ENCODE measurements at regions of chr19 and their contacts with region 1.

Region 1: DNA sequence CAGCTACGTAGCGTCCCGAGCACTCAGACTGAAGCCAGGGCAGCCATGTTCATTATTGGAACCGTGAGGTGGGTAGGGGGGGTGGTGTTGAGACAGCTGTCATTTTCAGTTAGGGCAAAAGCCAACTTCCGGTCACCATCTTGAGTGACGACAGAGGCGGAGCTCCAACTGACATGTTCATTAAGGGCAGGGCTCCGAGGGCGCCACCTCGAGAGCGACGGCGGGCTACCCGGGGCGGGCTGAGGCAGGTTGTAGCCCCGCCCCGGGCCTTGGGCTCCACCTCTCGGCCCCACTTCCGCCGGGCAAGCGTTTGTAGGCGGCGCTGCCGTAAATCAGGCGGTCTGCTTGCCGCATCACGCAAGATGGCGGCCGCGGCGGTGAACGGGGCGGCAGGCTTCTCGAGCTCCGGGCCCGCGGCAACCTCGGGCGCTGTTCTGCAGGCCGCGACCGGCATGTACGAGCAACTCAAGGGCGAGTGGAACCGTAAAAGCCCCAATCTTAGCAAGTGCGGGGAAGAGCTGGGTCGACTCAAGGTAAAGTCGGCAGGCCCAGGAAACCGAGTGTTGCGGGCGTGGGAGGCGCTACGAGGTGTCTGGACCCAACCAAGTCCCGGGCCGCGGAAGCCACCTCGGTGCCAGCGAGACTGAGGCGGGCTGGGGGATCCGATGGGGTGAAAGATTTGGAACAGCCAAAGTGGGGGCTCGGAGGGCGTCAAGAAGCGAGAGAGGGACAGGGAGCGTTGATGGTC is at the start of gene PSMD8:
- DNase-seq: peak; percentile 96
- ATAC-seq: peak; percentile 96
- H3K4me3 Mint-ChIP-seq: peak within 1 kb of the TSS; percentile 100
- H3K27ac Mint-ChIP-seq: peak within 1 kb of the TSS; percentile 96
- H3K4me1 Mint-ChIP-seq: peaks cover 25% of the 10 kb centered on the region
- H3K27me3 Mint-ChIP-seq: no peaks in the 10 kb centered on the region
- CTCF ChIP-seq: no peak
- total RNA-seq, gene PSMD8: 134 and 138 TPM in 2 replicates

Region 2: DNA sequence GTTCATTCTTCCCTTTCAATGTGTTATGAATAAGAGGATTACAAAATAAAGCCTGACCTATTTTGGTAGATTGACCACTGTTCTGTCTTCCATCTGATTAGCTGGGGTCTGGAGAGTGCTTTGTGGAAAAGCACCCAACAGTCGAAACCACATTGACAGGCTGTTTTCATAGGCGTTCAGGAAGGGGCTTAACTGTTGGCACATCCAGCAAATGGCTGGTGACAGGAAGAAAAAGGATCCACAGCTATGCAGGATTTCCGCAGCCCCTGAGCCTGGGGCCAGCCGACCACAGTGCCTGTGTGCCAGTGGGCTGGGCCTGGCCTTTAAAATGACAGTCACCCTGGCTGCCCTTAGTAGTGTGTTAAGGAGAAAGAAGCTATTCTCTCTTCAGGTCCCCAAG is 354.3 kb before region 1 on chr19:
- CTCF ChIA-PET with region 1: no interaction called
- POLR2A ChIA-PET with region 1: no interaction called
- intact Hi-C with region 1: no loop called
- DNase-seq: no peak
- ATAC-seq: peak; percentile 22
- H3K4me3 Mint-ChIP-seq: no peak overlapping the region
- H3K27ac Mint-ChIP-seq: peak overlapping the region; percentile 61
- H3K4me1 Mint-ChIP-seq: peaks cover 86% of the 10 kb centered on the region
- H3K27me3 Mint-ChIP-seq: no peaks in the 10 kb centered on the region
- CTCF ChIP-seq: no peak

Region 3: GRCh38 chr19:38229585-38230073 is 145.0 kb before region 1 on chr19:
- CTCF ChIA-PET with region 1: interaction called, 7 read pairs
- POLR2A ChIA-PET with region 1: no interaction called
- intact Hi-C with region 1: loop called (anchors 1 kb)
- DNase-seq: peak; percentile 52
- ATAC-seq: peak; percentile 87
- H3K4me3 Mint-ChIP-seq: no peak overlapping the region
- H3K27ac Mint-ChIP-seq: no peak overlapping the region
- H3K4me1 Mint-ChIP-seq: peaks cover 21% of the 10 kb centered on the region
- H3K27me3 Mint-ChIP-seq: peaks cover 40% of the 10 kb centered on the region
- CTCF ChIP-seq: no peak

Region 4: DNA sequence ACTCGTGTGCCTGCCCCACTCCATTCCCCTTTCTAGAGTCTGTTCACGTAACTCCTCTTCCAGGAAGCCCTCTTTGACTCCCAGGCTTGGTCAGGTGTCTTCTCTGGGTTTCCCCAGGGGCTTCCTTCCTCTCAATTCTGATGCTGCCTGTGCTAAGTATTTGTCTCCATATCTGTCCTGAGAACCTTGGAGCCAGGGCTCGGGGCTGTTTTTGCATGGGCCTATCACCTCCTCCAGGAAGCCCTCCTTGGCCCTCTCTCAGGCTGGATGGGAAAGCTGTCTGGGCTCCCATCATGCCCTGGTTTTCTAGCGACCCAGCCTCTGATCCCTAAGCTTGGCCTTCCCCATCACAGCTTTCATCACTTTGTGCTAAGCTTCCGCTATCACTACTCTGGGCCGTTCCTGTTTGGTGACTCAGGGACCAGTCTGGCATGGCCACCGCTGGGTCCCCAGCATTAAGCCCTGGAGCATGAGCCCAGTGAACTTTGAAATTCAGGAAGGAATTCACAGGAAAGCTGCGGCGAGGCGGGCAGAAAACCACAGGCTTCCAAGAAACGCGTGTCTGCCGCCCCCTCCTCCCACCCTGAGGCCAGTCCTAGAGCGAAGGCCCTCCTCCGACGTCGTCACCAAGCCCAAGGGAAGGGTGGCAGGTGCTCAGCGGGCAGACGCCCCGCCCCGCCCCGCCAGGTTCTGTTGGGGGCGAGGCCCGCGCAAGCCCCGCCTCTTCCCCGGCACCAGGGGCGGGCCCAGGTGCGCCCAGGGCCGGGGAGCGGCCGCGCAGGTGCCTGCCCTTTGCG is 110.7 kb before region 1 on chr19:
- CTCF ChIA-PET with region 1: no interaction called
- POLR2A ChIA-PET with region 1: interaction called, 33 read pairs
- intact Hi-C with region 1: loop called (anchors 1 kb)
- DNase-seq: peak; percentile 86
- ATAC-seq: peak; percentile 89
- H3K4me3 Mint-ChIP-seq: peak overlapping the region; percentile 91
- H3K27ac Mint-ChIP-seq: peak overlapping the region; percentile 99
- H3K4me1 Mint-ChIP-seq: peaks cover 43% of the 10 kb centered on the region
- H3K27me3 Mint-ChIP-seq: no peaks in the 10 kb centered on the region
- CTCF ChIP-seq: no peak

Region 5: DNA sequence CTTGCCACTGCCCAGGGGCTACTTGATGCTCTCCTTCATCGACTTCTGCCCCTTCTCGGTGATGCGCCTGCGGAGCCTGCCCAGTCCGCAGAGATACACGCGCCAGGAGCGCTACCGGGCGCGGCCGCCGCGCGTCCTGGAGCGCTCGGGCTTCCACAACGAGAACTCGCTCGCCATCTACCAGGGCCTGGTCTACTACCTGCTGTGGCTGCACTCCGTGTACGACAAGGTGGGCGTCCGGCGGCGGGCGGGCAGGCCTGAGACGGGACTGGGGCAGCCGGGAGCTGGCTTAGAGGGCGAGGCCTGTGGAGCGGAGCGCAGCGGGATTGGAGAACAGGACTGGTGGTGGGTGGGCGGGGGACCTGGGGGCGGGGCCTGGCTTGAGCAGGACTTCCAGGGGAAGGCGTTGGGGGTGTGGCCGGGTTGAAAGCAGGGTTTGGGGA is 12.9 kb before region 1 on chr19:
- CTCF ChIA-PET with region 1: no interaction called
- POLR2A ChIA-PET with region 1: interaction called, 21 read pairs
- intact Hi-C with region 1: loop called (anchors 1 kb)
- DNase-seq: no peak
- ATAC-seq: peak; percentile 76
- H3K4me3 Mint-ChIP-seq: peak overlapping the region; percentile 85
- H3K27ac Mint-ChIP-seq: no peak overlapping the region
- H3K4me1 Mint-ChIP-seq: peaks cover 19% of the 10 kb centered on the region
- H3K27me3 Mint-ChIP-seq: peaks cover 7% of the 10 kb centered on the region
- CTCF ChIP-seq: no peak

Region 6: GRCh38 chr19:38394488-38394887 is 19.9 kb after region 1 on chr19:
- CTCF ChIA-PET with region 1: interaction called, 4 read pairs
- POLR2A ChIA-PET with region 1: interaction called, 78 read pairs
- intact Hi-C with region 1: no loop called
- DNase-seq: peak; percentile 46
- ATAC-seq: peak; percentile 76
- H3K4me3 Mint-ChIP-seq: peak overlapping the region; percentile 73
- H3K27ac Mint-ChIP-seq: no peak overlapping the region
- H3K4me1 Mint-ChIP-seq: peaks cover 16% of the 10 kb centered on the region
- H3K27me3 Mint-ChIP-seq: peaks cover 36% of the 10 kb centered on the region
- CTCF ChIP-seq: no peak

Region 7: GRCh38 chr19:38606131-38606530 is 231.5 kb after region 1 on chr19:
- CTCF ChIA-PET with region 1: no interaction called
- POLR2A ChIA-PET with region 1: no interaction called
- intact Hi-C with region 1: no loop called
- DNase-seq: no peak
- ATAC-seq: no peak
- H3K4me3 Mint-ChIP-seq: no peak overlapping the region
- H3K27ac Mint-ChIP-seq: no peak overlapping the region
- H3K4me1 Mint-ChIP-seq: peaks cover under 1% of the 10 kb centered on the region
- H3K27me3 Mint-ChIP-seq: no peaks in the 10 kb centered on the region
- CTCF ChIP-seq: no peak

Region 8: DNA sequence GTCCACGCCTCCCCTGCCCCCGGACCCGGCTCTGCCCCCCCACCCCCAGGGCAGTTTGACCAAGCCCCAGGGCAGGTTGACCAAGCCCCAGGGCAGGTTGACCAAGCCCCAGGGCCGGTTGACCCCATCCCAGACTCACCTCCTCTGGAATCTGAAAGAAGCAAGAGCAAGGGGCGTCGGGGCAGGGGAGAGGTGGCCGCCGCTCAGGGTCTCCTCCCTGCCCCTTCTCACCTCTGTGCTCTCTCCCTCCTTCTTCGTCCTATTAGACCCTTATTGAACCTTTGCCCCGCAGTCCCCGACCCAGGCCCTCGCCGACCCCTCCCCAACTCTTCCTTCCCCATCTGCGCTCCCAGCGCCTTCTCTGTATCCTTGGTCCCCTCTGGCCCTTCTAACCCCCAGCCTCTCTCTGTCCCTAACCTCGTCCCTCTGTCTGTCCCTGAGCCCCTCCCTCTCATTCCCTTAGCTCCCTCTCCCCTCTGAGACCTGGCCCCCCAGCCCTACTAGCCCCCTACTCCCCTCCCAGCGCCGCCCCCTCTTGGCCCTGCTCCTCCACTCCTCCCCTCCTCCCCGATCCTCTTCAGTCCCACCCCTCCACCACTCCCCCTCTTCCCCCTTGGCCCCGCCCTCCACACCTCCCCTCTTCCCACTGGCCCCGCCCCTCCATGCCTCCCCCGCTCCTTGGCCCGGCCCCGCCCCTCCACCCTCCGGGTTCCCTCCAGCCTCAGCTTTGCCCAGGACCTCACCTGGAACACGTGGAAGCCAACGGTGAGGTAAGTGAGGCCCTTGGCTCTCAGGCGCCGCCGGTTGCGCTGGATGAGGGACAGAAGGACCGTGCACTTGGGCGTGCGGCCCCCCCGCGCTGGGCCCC is 362.0 kb after region 1 on chr19:
- CTCF ChIA-PET with region 1: no interaction called
- POLR2A ChIA-PET with region 1: interaction called, 9 read pairs
- intact Hi-C with region 1: loop called (anchors 1 kb)
- DNase-seq: peak; percentile 64
- ATAC-seq: peak; percentile 60
- H3K4me3 Mint-ChIP-seq: peak overlapping the region; percentile 71
- H3K27ac Mint-ChIP-seq: peak overlapping the region; percentile 12
- H3K4me1 Mint-ChIP-seq: peaks cover 38% of the 10 kb centered on the region
- H3K27me3 Mint-ChIP-seq: no peaks in the 10 kb centered on the region
- CTCF ChIP-seq: no peak

Measured in activated B cell treated with CpG ODN at 0.5 μM for 24 hours (primary cell).